Left cardiac atrium (tissue), 4 donors: ENCODE measurements at regions of chr11 and their contacts with region 1.

Region 1: DNA sequence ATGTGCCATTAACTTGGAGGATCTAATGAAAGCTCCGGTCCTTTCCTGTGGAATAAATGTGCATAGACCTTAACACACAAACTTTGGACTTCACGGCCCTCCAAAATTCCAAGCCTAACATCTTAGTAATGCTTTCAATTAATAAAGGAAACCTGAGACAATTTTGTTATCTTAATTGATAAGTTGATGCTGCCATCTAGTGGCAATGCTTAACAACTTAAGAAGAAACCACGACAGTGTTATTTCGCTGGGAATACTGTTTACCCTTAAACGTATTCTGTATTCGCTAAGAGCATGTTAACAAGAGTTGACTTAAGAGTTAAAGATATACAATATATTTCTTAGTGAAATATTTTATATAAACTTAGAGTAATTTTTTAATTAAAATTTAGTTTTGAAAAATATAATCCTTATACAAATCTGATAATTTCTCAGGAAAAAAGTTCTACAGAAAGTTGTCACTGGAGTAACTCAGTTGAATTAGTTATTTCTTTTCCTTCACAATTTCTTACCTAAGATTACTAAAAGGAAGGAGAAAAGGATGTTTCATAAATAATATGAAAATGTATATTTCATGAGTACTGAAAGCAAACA is 35.0 kb upstream of the OR9G4 start:
- DNase-seq: no peak
- ATAC-seq: no peak

Region 2: GRCh38 chr11:55942785-55943392 is 840.7 kb before region 1 on chr11:
- intact Hi-C with region 1: loop called in 1 of 2 experiments (anchors 5 kb)
- DNase-seq: no peak
- ATAC-seq: no peak

Region 3: DNA sequence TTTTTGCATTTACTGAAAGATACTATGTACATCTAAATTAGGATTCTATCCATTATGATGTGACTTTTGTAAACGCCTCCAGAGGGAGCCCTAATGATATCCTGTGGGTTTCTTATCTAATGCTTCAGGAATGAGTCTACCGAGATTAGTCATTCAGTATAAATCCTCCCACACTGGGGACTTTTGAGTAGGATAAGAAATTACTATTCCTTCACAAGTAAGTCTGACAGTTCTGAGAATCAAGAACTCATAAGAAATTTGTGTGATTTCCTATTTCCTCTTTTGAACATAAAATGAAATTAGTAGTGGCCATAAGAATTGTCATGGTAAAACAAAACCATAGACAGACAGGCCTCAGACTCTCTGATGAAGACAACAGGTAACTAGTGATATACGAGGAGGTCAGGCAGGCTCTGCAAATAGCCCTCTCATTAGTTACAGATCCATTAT is 158.9 kb before region 1 on chr11:
- intact Hi-C with region 1: loop called in 1 of 2 experiments (anchors 5 kb)
- DNase-seq: no peak
- ATAC-seq: peak in 1 of 2 donors; percentile 92

Region 4: DNA sequence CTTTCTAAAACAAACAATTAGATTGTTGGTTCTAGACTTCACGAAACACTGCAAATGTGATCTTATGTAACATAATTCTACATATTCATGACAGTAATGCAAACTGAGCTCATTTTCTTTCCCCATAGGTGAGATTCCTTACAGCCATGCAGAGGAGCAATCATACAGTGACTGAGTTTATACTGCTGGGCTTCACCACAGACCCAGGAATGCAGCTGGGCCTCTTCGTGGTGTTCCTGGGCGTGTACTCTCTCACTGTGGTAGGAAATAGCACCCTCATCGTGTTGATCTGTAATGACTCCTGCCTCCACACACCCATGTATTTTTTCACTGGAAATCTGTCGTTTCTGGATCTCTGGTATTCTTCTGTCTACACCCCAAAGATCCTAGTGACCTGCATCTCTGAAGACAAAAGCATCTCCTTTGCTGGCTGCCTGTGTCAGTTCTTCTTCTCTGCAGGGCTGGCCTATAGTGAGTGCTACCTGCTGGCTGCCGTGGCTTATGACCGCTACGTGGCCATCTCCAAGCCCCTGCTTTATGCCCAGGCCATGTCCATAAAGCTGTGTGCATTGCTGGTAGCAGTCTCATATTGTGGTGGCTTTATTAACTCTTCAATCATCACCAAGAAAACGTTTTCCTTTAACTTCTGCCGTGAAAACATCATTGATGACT is 83.2 kb before region 1 on chr11:
- intact Hi-C with region 1: no loop called
- DNase-seq: no peak
- ATAC-seq: no peak

Region 5: GRCh38 chr11:56740107-56740506 is 43.4 kb before region 1 on chr11:
- intact Hi-C with region 1: no loop called
- DNase-seq: no peak
- ATAC-seq: no peak